ENCODE measurements at regions of chr19 and their contacts with region 1.

Region 1: DNA sequence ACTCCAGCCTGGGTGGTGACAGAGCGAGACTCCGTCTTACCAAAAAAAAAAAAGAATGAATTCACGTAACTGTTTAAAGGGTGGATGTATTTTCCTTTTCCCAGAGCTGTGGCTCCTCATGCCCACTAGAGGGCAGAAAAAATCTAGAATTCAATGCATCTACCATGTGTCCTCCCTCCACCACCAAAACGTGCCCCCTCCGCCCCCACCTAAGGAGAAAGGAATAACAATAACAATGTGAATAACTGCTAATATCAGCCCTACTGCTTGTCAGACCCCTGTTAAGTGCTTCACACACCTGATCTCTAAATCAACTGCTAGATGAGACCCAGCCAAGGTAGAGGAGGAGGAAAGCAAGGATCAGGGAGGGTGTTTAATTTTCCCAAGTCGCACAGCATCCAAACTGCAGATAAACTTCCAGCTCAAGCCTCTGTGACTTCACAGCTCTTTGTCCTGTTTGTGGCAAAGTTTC is 20.2 kb upstream of the PNMA8B start:
- DNase-seq: no peak
- H3K4me3 ChIP-seq: no peak overlapping the region
- H3K27ac ChIP-seq: no peak overlapping the region
- H3K4me1 ChIP-seq: no peaks in the 10 kb centered on the region
- H3K27me3 ChIP-seq: no peaks in the 10 kb centered on the region
- CTCF ChIP-seq: peak; percentile 67

Region 2: GRCh38 chr19:46392243-46392801 is 123.6 kb before region 1 on chr19:
- intact Hi-C with region 1: loop called (anchors 5 kb)
- DNase-seq: no peak
- H3K4me3 ChIP-seq: no peak overlapping the region
- H3K27ac ChIP-seq: no peak overlapping the region
- H3K4me1 ChIP-seq: no peaks in the 10 kb centered on the region
- H3K27me3 ChIP-seq: no peaks in the 10 kb centered on the region
- CTCF ChIP-seq: no peak

Region 3: GRCh38 chr19:46564701-46565100 is 48.8 kb after region 1 on chr19:
- intact Hi-C with region 1: no loop called
- DNase-seq: no peak
- H3K4me3 ChIP-seq: no peak overlapping the region
- H3K27ac ChIP-seq: no peak overlapping the region
- H3K4me1 ChIP-seq: no peaks in the 10 kb centered on the region
- H3K27me3 ChIP-seq: no peaks in the 10 kb centered on the region
- CTCF ChIP-seq: no peak